ENCODE measurements at regions of chr2 and their contacts with region 1.

Region 1: GRCh38 chr2:88199912-88200682 is 30.0 kb downstream of the THNSL2 start:
- ATAC-seq: peak; percentile 47 to 84 (median 68)
- H3K4me3 ChIP-seq: no peak overlapping the region
- H3K27ac ChIP-seq: no peak overlapping the region
- H3K4me1 ChIP-seq: peaks cover 11 to 13% of the 10 kb centered on the region in 2 donors

Region 2: GRCh38 chr2:88342749-88343148 is 142.7 kb after region 1 on chr2:
- in situ Hi-C with region 1: no loop called
- ATAC-seq: no peak
- H3K4me3 ChIP-seq: no peak overlapping the region
- H3K27ac ChIP-seq: no peak overlapping the region
- H3K4me1 ChIP-seq: no peaks in the 10 kb centered on the region

Region 3: DNA sequence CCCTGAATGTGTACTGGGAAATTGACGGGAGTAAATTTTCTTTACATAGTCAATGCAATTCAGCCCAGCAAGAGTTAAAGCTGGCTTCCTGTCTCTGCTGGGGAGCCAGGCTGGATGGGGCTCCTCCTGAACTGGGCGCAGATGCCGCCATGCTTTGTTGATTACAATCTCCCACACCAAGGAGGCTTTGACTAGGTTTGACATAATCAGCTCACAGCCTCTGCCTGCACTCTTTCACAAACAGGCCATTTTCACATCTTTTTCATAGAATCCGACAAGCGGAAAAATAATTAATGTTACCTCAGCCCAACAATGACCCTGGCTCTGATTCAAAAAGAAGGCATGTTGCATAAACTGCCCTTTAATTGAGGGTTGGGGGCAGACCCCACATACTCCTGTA is 198.1 kb after region 1 on chr2:
- in situ Hi-C with region 1: loop called in 1 of 9 experiments (anchors 25 kb)
- ATAC-seq: no peak
- H3K4me3 ChIP-seq: no peak overlapping the region
- H3K27ac ChIP-seq: no peak overlapping the region
- H3K4me1 ChIP-seq: no peaks in the 10 kb centered on the region

Region 4: GRCh38 chr2:88521445-88522073 is 321.5 kb after region 1 on chr2:
- in situ Hi-C with region 1: loop called in 1 of 9 experiments (anchors 25 kb)
- ATAC-seq: peak in 3 of 8 experiments; percentile 72 to 91 (median 87)
- H3K4me3 ChIP-seq: no peak overlapping the region
- H3K27ac ChIP-seq: no peak overlapping the region
- H3K4me1 ChIP-seq: no peaks in the 10 kb centered on the region